ENCODE measurements at regions of chr7 and their contacts with region 1.

Region 1: DNA sequence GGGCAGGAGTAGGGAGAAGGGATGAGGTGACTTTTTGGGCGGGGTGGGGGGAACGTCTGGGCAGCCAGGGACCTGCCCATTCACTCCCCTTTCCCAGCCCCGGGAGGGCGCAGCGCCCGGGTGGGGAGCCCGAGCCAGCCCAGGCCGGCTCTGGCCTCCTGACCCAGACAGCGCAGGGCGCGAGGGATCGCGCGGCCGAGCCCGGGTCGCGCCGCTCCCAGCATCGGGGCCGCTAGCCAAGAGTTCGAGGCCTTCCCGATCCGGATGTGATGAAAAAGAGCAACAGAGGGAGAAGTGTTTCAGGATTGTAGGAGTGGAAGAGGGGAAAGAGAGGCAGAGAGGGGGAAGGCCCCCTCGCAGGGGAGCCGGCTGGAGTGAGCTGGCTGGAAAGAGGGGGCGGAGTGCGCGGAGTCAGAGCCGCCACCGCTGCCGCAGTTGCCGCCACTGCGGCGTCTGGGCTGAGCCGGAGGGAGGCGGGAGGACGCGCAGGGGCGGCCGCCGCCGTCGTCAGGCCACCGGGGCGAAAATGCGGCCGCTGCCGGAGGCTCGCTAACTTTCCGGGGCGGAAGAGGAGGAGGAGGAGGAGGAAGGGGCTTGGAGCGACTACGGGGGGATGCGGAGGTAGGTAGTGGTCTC is at the start of gene MDFIC:
- DNase-seq: peak; percentile 64
- ATAC-seq: peak; percentile 79
- H3K4me3 ChIP-seq: peak within 1 kb of the TSS; percentile 68
- H3K27ac ChIP-seq: peak within 1 kb of the TSS; percentile 77
- H3K4me1 ChIP-seq: peaks cover 4% of the 10 kb centered on the region; the same call in 1 of the 2 replicates
- H3K27me3 ChIP-seq: no peaks in the 10 kb centered on the region
- CTCF ChIP-seq: no peak
- POLR2A ChIP-seq: peak; percentile 80
- RAD21 ChIP-seq: peak; percentile 15
- total RNA-seq, gene MDFIC: 29.7 and 35.0 TPM in 2 replicates

Region 2: GRCh38 chr7:114944745-114945625 is 22.9 kb after region 1 on chr7:
- CTCF ChIA-PET with region 1: no interaction called
- POLR2A ChIA-PET with region 1: no interaction called
- dilution Hi-C with region 1: no loop called
- in situ Hi-C with region 1: no loop called
- intact Hi-C with region 1: loop called (anchors 2 kb)
- DNase-seq: peak; percentile 94
- ATAC-seq: peak; percentile 98
- H3K4me3 ChIP-seq: peak overlapping the region; percentile 43
- H3K27ac ChIP-seq: peak overlapping the region; percentile 72
- H3K4me1 ChIP-seq: peaks cover 5% of the 10 kb centered on the region
- H3K27me3 ChIP-seq: no peaks in the 10 kb centered on the region
- CTCF ChIP-seq: no peak
- POLR2A ChIP-seq: no peak
- RAD21 ChIP-seq: peak; percentile 5; the same call in 1 of the 2 replicates

Region 3: GRCh38 chr7:115356139-115356746 is 434.1 kb after region 1 on chr7:
- CTCF ChIA-PET with region 1: no interaction called
- POLR2A ChIA-PET with region 1: no interaction called
- dilution Hi-C with region 1: no loop called
- in situ Hi-C with region 1: no loop called
- intact Hi-C with region 1: loop called (anchors 2 kb)
- DNase-seq: peak; percentile 44
- ATAC-seq: no peak
- H3K4me3 ChIP-seq: no peak overlapping the region
- H3K27ac ChIP-seq: no peak overlapping the region
- H3K4me1 ChIP-seq: peaks cover 4% of the 10 kb centered on the region; the same call in 1 of the 2 replicates
- H3K27me3 ChIP-seq: no peaks in the 10 kb centered on the region
- CTCF ChIP-seq: peak; percentile 48
- POLR2A ChIP-seq: no peak
- RAD21 ChIP-seq: peak; percentile 42

Region 4: DNA sequence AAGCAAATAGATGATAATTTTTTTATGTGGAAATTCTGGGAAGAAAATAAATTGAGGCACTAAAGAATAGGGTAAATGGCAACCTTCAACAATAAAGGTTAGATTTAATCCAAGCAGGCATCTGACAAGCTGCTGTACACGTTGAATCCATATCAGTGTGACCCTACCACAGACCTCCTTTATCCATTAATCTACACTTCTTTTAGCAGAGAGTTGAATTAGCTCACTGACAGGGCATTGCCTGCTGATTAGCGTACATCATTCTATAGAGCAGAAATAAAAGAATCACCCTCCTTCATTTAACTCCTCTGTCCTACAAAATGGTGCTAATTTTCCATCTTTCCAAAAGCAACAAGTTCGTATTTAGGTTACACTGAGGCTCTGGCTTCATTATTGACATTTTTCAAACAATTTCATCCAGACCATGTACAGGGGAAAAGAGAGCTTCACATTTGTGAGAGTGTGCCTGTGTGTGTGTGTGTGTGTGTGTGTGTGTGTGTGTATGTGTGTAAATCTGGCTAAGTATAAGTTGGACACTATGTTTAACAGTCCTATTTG is 752.4 kb after region 1 on chr7:
- CTCF ChIA-PET with region 1: no interaction called
- POLR2A ChIA-PET with region 1: no interaction called
- dilution Hi-C with region 1: no loop called
- in situ Hi-C with region 1: no loop called
- intact Hi-C with region 1: loop called (anchors 2 kb)
- DNase-seq: no peak
- ATAC-seq: no peak
- H3K4me3 ChIP-seq: no peak overlapping the region
- H3K27ac ChIP-seq: no peak overlapping the region
- H3K4me1 ChIP-seq: peaks cover 2% of the 10 kb centered on the region; the same call in 1 of the 2 replicates
- H3K27me3 ChIP-seq: no peaks in the 10 kb centered on the region
- CTCF ChIP-seq: no peak
- POLR2A ChIP-seq: no peak
- RAD21 ChIP-seq: no peak

Measured in IMR-90 (cell line).